H1 (cell line): ENCODE measurements at regions of chr12 and their contacts with region 1.

Region 1: DNA sequence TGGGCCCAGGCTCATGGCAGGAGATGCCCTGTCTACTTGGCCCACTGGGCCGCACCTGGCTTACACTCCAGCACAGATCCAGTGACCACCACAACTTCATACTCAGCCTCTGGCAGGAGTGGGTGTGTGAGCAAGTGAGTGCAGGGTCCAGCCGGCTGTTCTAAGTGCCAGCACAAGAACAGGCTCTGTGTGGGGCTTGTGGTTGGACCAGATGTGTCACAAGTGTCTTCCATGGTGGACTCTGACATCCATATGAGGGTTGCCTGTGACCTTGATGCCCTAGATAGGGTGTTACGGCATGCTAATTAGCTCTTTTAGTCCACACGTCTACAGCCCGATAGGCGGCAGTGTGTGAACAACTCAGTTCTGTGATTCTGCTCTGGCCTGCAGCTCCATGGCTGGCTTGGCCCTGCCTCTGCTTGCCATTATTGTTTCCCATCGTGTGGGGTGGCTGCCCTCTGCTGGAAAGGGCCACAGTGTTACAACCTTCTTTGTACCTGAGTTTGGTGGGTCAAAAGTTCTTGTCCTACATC is 1089.1 kb downstream of the SLC6A15 start:
- DNase-seq: peak; percentile 78
- H3K4me3 ChIP-seq: no peak overlapping the region
- H3K27ac ChIP-seq: no peak overlapping the region
- H3K4me1 ChIP-seq: peaks cover 0 to 1% (median 0%) of the 10 kb centered on the region in 4 experiments; a peak in 2 of 7 replicates
- H3K27me3 ChIP-seq: no peaks in the 10 kb centered on the region
- CTCF ChIP-seq: peak; percentile 85 to 98 (median 95)
- EP300 ChIP-seq: no peak
- POLR2A ChIP-seq: no peak
- RAD21 ChIP-seq: peak; percentile 99

Region 2: DNA sequence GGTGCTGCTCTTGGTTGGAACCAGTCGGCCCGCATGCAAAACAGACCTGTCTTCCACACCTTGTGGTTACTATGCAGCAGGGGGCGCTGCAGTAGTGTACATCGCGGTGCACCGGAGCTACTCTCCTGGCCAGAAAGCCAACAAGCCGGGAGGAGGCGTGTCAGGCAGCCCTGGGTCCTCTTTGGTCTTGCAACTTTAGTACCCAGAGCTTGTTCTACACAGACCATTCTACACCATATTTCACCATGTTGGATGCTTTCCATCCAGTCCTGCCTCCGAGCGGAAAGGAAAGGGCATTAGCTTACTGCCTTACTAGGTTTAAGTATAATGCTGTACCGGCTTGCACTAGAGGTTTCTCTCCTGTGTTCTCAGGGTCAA is 1137.7 kb before region 1 on chr12:
- CTCF ChIA-PET with region 1: interaction called, 22 read pairs
- POLR2A ChIA-PET with region 1: no interaction called
- DNase-seq: peak; percentile 72 to 93
- H3K4me3 ChIP-seq: peak overlapping the region; percentile 73 to 94 (median 86)
- H3K27ac ChIP-seq: no peak overlapping the region
- H3K4me1 ChIP-seq: peaks cover 0 to 7% (median 5%) of the 10 kb centered on the region in 4 experiments; a peak in 3 of 7 replicates
- H3K27me3 ChIP-seq: 0 out of 7 replicates have a peak, but pooled peaks cover 0 to 2% (median 0%) of the 10 kb centered on the region in 4 experiments
- CTCF ChIP-seq: peak; percentile 86 to 97 (median 93)
- EP300 ChIP-seq: no peak
- POLR2A ChIP-seq: no peak
- RAD21 ChIP-seq: peak; percentile 97 to 99

Region 3: DNA sequence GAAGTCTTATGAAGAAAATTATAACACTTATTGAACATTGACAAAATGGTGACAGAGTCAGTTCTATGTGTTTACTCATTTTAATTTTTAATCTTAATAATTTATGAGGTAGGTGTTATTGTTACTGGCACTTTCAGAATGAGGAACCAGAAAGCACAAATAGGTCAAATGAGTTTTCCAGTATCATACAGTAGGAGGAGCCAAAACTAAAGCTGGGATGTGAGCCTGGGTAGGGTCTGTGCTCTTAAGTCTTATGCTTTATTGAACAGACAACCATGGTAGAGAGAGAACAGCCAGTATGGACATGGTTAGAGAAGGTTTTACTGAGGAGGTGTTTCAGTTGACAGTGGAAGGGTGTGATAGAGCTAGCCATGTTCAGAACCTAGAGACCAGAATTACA is 361.1 kb before region 1 on chr12:
- CTCF ChIA-PET with region 1: interaction called, 15 read pairs
- POLR2A ChIA-PET with region 1: no interaction called
- DNase-seq: no peak
- H3K4me3 ChIP-seq: no peak overlapping the region
- H3K27ac ChIP-seq: no peak overlapping the region
- H3K4me1 ChIP-seq: no peaks in the 10 kb centered on the region
- H3K27me3 ChIP-seq: no peaks in the 10 kb centered on the region
- CTCF ChIP-seq: peak in 2 of 3 experiments; percentile 21 to 35; a peak in 2 of 4 replicates
- EP300 ChIP-seq: no peak
- POLR2A ChIP-seq: no peak
- RAD21 ChIP-seq: peak; percentile 62 to 70

Region 4: GRCh38 chr12:84497819-84498218 is 674.3 kb after region 1 on chr12:
- CTCF ChIA-PET with region 1: interaction called, 34 read pairs
- POLR2A ChIA-PET with region 1: no interaction called
- DNase-seq: no peak
- H3K4me3 ChIP-seq: no peak overlapping the region
- H3K27ac ChIP-seq: no peak overlapping the region
- H3K4me1 ChIP-seq: no peaks in the 10 kb centered on the region
- H3K27me3 ChIP-seq: no peaks in the 10 kb centered on the region
- CTCF ChIP-seq: peak in 2 of 3 experiments; percentile 46 to 57; a peak in 3 of 4 replicates
- EP300 ChIP-seq: no peak
- POLR2A ChIP-seq: no peak
- RAD21 ChIP-seq: peak; percentile 64 to 70

Region 5: GRCh38 chr12:84507956-84508850 is 684.7 kb after region 1 on chr12:
- CTCF ChIA-PET with region 1: interaction called, 34 read pairs
- POLR2A ChIA-PET with region 1: no interaction called
- DNase-seq: no peak
- H3K4me3 ChIP-seq: no peak overlapping the region
- H3K27ac ChIP-seq: no peak overlapping the region
- H3K4me1 ChIP-seq: no peaks in the 10 kb centered on the region
- H3K27me3 ChIP-seq: no peaks in the 10 kb centered on the region
- CTCF ChIP-seq: peak in 2 of 3 experiments; percentile 28 to 61; a peak in 2 of 4 replicates
- EP300 ChIP-seq: no peak
- POLR2A ChIP-seq: no peak
- RAD21 ChIP-seq: peak; percentile 49 to 54